ENCODE measurements at regions of chr10 and their contacts with region 1.

Region 1: DNA sequence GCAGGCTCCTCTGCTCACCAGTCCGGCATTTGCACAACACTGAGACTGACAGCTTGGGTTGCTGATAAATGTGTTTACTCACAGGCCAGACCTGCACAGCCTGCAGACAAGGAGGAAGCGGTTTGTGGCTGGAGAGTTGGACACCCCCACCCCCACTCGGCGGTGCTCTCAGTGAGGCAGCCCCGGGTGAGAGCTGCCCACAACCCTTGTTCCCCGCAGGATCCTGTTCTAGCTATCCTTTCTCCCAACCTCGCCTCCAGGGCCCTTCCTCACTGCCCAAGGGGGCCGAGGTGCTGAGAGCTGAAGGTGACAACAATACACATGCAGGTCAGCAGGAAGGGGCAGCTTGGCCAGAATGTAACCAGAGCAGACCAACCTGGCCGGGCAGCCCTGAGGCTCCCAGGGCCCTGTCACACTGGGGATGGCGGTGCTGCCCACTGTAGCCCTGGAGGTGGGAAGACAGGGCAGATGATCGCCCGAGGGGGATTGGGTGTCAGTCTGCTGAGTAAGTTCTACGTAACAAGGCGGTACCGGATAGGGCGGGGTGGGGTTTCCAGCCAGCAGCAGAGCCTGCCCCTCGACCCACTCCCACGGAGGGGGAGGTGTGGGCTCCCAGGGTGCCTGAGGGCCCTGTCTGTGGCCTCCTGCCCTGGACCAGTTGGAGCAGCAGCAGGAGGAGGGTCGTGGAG is 2.1 kb upstream of the ADAM8 start:
- DNase-seq: peak; percentile 73 to 89 (median 77)
- H3K4me3 ChIP-seq: peak overlapping the region in 1 of 2 donors; percentile 3
- H3K4me3 Mint-ChIP-seq: peak overlapping the region; percentile 80 to 96 (median 89)
- H3K27ac ChIP-seq: peak overlapping the region; percentile 99
- H3K27ac Mint-ChIP-seq: peak overlapping the region; percentile 95 to 99 (median 98)
- H3K4me1 ChIP-seq: peaks cover 50% of the 10 kb centered on the region
- H3K4me1 Mint-ChIP-seq: peaks cover 15 to 48% (median 35%) of the 10 kb centered on the region in 4 donors
- H3K27me3 ChIP-seq: no peaks in the 10 kb centered on the region
- H3K27me3 Mint-ChIP-seq: no peaks in the 10 kb centered on the region

Region 2: DNA sequence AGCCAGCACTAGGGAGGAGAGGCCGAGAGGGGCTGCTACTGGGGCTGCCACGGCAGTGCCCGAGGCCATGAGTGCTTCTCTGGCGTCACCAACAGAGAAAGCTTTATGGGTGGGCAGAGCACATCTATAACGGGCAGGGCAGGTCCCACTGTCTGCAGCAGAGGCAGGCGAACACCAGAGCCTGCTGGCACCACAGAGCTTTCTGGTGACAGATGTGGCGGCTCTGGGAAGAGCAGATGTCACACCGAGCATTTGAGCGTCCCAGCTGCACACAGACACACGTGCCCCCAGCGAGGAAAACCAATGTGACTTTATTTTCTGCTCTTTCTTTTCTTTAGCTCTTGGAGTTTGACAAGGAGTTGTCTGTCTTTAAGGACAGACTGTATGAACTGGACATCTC is 513.3 kb before region 1 on chr10:
- CTCF ChIA-PET with region 1: no interaction called
- POLR2A ChIA-PET with region 1: no interaction called
- intact Hi-C with region 1: no loop called
- DNase-seq: no peak
- H3K4me3 ChIP-seq: no peak overlapping the region
- H3K4me3 Mint-ChIP-seq: no peak overlapping the region
- H3K27ac ChIP-seq: no peak overlapping the region
- H3K27ac Mint-ChIP-seq: no peak overlapping the region
- H3K4me1 ChIP-seq: no peaks in the 10 kb centered on the region
- H3K4me1 Mint-ChIP-seq: peaks cover 5 to 13% (median 10%) of the 10 kb centered on the region in 4 donors
- H3K27me3 ChIP-seq: no peaks in the 10 kb centered on the region
- H3K27me3 Mint-ChIP-seq: no peaks in the 10 kb centered on the region

Region 3: DNA sequence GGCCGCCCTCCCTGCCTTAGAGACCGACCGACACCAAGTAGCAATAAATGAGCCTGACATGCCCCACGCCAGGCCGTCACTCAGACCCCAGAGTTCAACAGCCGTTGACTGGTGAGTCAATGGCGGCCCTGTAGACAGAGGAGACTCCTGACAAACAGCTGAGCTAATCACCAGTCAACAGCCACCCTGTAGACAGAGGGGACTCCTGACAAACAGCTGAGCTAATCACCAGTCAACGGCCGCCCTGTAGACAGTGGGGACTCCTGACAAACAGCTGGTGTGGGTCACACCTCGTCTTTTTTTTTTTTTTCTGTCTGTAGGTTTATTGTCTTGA is 135.6 kb before region 1 on chr10:
- CTCF ChIA-PET with region 1: interaction called, 8 read pairs
- POLR2A ChIA-PET with region 1: no interaction called
- intact Hi-C with region 1: loop called (anchors 1 kb)
- DNase-seq: no peak
- H3K4me3 ChIP-seq: no peak overlapping the region
- H3K4me3 Mint-ChIP-seq: no peak overlapping the region
- H3K27ac ChIP-seq: no peak overlapping the region
- H3K27ac Mint-ChIP-seq: no peak overlapping the region
- H3K4me1 ChIP-seq: no peaks in the 10 kb centered on the region
- H3K4me1 Mint-ChIP-seq: peaks cover 4 to 11% (median 7%) of the 10 kb centered on the region in 4 donors
- H3K27me3 ChIP-seq: no peaks in the 10 kb centered on the region
- H3K27me3 Mint-ChIP-seq: peaks cover 27 to 35% of the 10 kb centered on the region in 2 donors

Region 4: DNA sequence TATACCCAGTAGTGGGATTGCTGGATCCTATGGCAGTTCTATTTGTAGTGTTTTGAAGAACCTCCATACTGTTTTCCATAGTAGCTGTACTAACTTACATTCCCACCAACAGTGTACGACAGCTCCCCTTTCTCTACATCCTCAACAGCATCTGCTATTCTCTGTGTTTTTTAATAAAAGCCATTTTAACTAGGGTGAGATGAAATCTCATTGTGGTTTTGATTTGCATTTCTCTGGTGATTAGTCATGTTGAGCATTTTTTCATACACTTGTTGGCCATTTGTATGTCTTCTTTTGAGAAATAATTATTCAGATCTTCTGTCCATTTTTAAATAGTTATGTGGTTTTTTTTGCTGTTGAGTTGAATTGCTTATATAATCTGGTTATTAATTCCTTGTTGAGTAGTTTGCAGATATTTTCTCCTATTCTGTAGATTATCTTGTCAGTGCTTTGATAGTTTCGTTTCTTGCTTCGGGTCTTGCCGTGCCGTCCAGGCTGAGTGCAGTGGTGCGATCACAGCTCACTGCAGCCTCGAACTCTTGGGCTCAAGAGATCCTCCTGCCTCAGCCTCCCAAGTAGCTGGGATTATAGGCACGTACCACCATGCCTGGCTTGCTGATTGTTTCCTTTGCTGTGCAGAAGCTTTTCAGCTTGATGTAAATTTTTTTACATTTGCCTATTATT is 127.3 kb after region 1 on chr10:
- CTCF ChIA-PET with region 1: no interaction called
- POLR2A ChIA-PET with region 1: no interaction called
- intact Hi-C with region 1: no loop called
- DNase-seq: no peak
- H3K4me3 ChIP-seq: no peak overlapping the region
- H3K4me3 Mint-ChIP-seq: peak overlapping the region in 3 of 8 donors; percentile 2 to 68 (median 65)
- H3K27ac ChIP-seq: no peak overlapping the region
- H3K27ac Mint-ChIP-seq: peak overlapping the region in 5 of 7 donors; percentile 36 to 45 (median 42)
- H3K4me1 ChIP-seq: peaks cover 10% of the 10 kb centered on the region
- H3K4me1 Mint-ChIP-seq: peaks cover 37 to 52% (median 47%) of the 10 kb centered on the region in 4 donors
- H3K27me3 ChIP-seq: no peaks in the 10 kb centered on the region
- H3K27me3 Mint-ChIP-seq: no peaks in the 10 kb centered on the region

Measured in CD4-positive, alpha-beta memory T cell (primary cell).